Left cardiac atrium (tissue), 4 donors: ENCODE measurements at regions of chr18 and their contacts with region 1.

Region 1: GRCh38 chr18:7755753-7756475 is 188.8 kb downstream of the PTPRM start:
- DNase-seq: no peak
- ATAC-seq: peak; percentile 43 to 70

Region 2: DNA sequence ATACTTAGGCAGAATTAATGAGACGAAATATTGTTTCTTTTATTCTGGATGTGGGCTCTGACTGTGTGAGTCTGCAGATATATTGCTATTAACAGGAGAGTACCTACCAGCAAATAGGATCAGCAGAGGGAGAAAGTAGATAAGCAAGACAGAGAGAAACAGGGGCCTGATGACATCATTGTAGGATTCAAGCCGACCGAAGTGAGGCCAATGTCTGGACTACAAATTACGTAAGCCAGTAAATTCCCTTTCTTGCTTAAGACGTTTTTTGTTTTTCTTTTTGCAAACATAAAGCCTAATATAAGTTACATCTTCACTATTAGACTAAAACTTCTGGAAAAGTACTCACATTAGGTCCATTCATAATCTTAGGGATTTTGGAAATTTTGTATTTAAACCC is 210.2 kb before region 1 on chr18:
- intact Hi-C with region 1: no loop called
- DNase-seq: no peak
- ATAC-seq: peak in 1 of 2 donors; percentile 33

Region 3: DNA sequence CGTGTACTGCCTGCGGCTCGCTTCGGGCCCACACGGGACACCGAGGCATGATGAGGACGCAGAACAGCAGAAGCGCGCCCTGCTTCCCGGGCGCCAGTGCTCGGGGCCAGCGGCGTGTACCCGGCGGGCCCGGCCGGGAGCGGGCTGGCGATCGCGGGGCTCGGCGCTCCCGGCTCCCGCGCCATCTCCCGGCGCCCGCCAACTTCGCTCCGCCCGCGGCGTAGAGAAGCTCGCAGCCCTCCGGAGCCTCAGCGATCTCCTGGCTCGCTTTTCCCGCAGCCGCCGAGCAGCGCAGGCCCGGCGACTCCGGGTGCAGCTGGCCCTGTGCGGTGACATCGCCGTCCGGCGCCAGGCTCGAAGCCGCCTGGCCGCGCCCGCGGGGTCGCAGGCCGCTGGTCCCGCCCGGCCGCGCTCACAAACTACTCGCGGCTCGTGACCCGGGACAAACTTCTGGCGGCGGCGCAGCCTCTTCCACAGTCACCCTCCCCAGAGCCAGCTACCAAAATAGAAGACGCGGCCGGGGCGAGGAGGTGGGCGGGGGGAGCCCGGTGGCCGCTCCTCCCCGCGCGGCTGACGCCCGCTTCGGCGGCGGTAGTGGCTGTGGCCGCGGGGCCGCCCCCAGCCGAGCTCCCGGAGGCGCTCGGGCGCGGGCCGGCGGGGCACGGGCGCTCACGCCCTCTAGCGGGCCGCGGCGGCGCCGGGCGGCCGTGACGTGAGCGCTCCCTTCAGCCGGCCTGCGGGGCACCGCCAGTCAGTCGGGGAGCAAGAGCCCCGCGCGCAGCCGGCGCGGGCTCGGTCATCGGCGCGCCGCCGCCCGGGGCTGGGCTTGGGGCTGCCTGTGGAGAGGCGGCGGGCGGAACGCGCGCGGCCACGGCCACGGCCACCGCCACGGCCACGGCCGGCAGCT is 189.1 kb before region 1 on chr18 and contains the start of gene PTPRM:
- intact Hi-C with region 1: loop called (anchors 1 to 10 kb)
- DNase-seq: peak; percentile 93
- ATAC-seq: peak; percentile 90 to 93
- total RNA-seq, gene PTPRM: 51.4 to 75.5 TPM

Region 4: GRCh38 chr18:7575157-7576028 is 180.5 kb before region 1 on chr18:
- intact Hi-C with region 1: loop called in 1 of 2 experiments (anchors 10 kb)
- DNase-seq: no peak
- ATAC-seq: peak; percentile 29 to 31